ENCODE measurements at regions of chr15 and their contacts with region 1.

Region 1: GRCh38 chr15:83559310-83559966 is 94.5 kb upstream of the ADAMTSL3 start:
- DNase-seq: no peak
- ATAC-seq: no peak
- H3K4me3 ChIP-seq: no peak overlapping the region
- H3K27ac ChIP-seq: no peak overlapping the region
- H3K4me1 ChIP-seq: no peaks in the 10 kb centered on the region
- H3K27me3 ChIP-seq: peaks cover 0 to 1% (median 0%) of the 10 kb centered on the region in 3 donors
- CTCF ChIP-seq: peak; percentile 27 to 72 (median 52)
- POLR2A ChIP-seq: no peak

Region 2: GRCh38 chr15:83248151-83249029 is 311.0 kb before region 1 on chr15:
- in situ Hi-C with region 1: loop called in 3 of 4 experiments (anchors 5 to 25 kb)
- intact Hi-C with region 1: loop called (anchors 5 kb)
- DNase-seq: no peak
- ATAC-seq: peak in 1 of 2 donors; percentile 61
- H3K4me3 ChIP-seq: no peak overlapping the region
- H3K27ac ChIP-seq: no peak overlapping the region
- H3K4me1 ChIP-seq: no peaks in the 10 kb centered on the region
- H3K27me3 ChIP-seq: peaks cover 5 to 22% (median 9%) of the 10 kb centered on the region in 3 donors
- CTCF ChIP-seq: peak; percentile 67 to 89 (median 71)
- POLR2A ChIP-seq: no peak

Region 3: DNA sequence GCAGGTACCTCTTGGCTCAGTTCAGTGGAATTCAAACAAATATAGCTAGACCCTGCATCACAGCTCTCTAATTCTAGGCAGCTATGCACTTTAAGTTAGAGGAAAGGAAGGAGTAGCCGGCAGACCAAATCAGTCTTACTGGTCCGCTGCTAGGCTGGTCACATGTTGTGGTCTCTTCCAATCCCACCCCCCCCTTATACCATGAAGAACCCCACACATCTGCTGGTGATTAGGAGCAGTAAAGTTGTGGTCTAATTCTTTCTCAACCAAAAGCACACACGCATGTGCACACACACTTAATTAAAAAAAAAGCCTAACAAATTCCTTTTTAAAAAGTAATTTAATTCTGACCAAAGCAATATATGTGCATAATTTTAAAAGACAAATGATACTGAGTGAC is 129.0 kb before region 1 on chr15:
- in situ Hi-C with region 1: loop called (anchors 5 to 10 kb)
- intact Hi-C with region 1: no loop called
- DNase-seq: no peak
- ATAC-seq: no peak
- H3K4me3 ChIP-seq: no peak overlapping the region
- H3K27ac ChIP-seq: no peak overlapping the region
- H3K4me1 ChIP-seq: no peaks in the 10 kb centered on the region
- H3K27me3 ChIP-seq: peaks cover 0 to 6% (median 4%) of the 10 kb centered on the region in 3 donors
- CTCF ChIP-seq: no peak
- POLR2A ChIP-seq: no peak

Region 4: DNA sequence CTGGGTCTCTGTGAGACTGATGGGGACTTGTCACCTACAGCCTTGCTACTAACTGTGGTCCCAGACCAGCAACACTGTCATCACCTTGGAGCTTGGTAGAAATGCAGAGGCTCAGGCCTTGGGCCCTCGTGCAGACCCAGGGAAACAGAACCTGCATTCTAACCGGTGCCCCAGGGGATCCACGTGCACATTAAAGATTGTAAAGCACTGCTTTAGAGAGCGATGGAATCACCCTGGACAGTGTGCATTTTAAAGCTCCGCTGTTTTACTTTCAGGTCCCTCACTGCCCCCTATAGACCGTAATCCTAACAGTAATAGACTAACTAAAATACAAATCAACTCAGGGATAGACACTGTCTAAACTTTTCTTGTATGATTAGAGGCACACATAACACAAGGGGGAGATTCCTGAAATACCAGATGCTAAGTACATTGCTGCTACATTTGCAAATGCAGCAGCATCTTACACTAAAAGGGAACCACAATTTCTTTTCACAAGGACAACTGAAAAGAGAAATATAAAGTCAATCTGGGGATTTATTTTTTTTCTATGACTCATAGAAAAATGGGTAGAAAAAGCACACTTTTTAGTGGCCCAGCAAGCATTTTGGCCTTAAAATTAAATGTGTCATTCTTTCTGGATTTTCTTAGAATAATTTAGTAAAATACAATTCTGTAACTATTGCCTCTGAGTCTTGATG is 122.8 kb before region 1 on chr15:
- in situ Hi-C with region 1: loop called (anchors 5 to 10 kb)
- intact Hi-C with region 1: loop called (anchors 1 kb)
- DNase-seq: no peak
- ATAC-seq: no peak
- H3K4me3 ChIP-seq: no peak overlapping the region
- H3K27ac ChIP-seq: no peak overlapping the region
- H3K4me1 ChIP-seq: no peaks in the 10 kb centered on the region
- H3K27me3 ChIP-seq: peaks cover 0 to 4% (median 0%) of the 10 kb centered on the region in 3 donors
- CTCF ChIP-seq: no peak
- POLR2A ChIP-seq: no peak

Region 5: DNA sequence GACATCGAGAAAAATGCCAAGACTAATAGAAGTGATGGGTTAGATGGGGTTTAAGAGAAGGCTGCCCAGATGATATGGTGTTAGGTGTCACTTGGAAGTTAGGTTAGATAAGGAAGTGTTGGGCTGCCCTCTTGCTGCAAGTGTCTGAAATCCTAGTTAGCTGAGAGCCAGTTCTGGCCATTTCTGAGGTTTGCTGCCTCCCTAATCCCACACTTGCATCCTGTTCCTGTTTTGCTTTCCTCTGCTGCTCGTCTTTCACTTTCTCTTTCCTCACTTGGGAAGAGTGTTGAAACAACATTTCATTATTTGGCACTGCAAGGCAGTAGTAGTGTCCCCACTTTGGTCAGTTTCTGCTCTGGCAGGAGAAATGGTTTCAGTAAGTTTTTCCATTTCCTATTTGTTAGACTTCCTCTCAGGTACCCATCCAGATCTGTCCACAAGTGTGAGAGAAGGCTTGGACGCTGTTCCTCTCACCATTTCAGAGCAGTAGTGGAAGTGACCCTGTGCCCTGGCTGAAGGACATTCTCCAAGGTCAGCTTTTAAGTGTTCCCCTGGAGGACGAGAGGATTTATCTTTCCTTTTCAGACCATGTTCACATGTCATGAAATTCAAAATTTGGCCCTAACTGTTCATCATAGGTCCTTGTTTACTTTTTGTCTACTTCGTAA is 187.7 kb after region 1 on chr15:
- in situ Hi-C with region 1: loop called in 1 of 4 experiments (anchors 25 kb)
- intact Hi-C with region 1: no loop called
- DNase-seq: peak; percentile 12 to 43
- ATAC-seq: peak; percentile 80
- H3K4me3 ChIP-seq: peak overlapping the region in 1 of 4 donors; percentile 24
- H3K27ac ChIP-seq: peak overlapping the region in 3 of 4 donors; percentile 27 to 50 (median 49)
- H3K4me1 ChIP-seq: no peaks in the 10 kb centered on the region
- H3K27me3 ChIP-seq: no peaks in the 10 kb centered on the region
- CTCF ChIP-seq: peak in 1 of 5 experiments; percentile 37
- POLR2A ChIP-seq: no peak

Region 6: DNA sequence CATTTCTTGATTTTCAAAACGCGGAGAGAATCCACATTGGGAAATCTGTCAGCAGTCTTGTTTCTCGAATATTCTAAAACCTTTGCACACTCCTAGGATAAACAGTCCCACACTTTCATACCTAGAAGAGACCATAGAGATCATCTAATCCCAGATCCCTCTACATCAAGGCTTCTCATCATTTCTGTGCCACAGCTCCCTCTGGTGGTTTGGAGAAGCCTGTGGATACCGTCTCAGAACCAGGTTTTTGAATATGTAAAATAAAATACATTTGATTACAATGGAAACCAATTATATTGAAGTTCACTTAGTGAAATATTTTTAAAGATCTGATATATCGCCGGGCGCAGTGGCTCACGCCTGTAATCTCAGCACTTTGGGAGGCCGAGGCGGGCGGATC is 464.2 kb after region 1 on chr15:
- in situ Hi-C with region 1: loop called in 3 of 4 experiments (anchors 10 to 25 kb)
- intact Hi-C with region 1: no loop called
- DNase-seq: no peak
- ATAC-seq: no peak
- H3K4me3 ChIP-seq: no peak overlapping the region
- H3K27ac ChIP-seq: no peak overlapping the region
- H3K4me1 ChIP-seq: no peaks in the 10 kb centered on the region
- H3K27me3 ChIP-seq: no peaks in the 10 kb centered on the region
- CTCF ChIP-seq: peak in 4 of 5 experiments; percentile 24 to 47 (median 37)
- POLR2A ChIP-seq: no peak

Region 7: DNA sequence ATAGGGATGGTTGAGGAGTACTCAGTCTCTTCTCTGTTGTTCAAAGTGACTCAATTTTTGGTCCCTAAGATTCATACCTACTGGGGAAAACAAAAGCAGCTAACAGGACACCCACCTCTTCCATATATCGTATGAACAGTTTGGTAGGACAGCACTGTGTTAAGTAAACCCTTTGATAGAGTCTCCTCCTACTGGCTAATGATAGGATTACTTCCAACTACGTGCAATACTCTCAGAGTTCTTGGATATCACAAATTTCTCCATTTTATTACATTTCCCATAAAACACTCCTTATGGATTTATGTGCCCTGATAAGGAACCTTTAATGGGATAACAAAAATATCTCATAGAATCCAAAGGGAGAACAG is 475.9 kb after region 1 on chr15:
- in situ Hi-C with region 1: loop called in 2 of 4 experiments (anchors 25 kb)
- intact Hi-C with region 1: no loop called
- DNase-seq: no peak
- ATAC-seq: no peak
- H3K4me3 ChIP-seq: no peak overlapping the region
- H3K27ac ChIP-seq: no peak overlapping the region
- H3K4me1 ChIP-seq: no peaks in the 10 kb centered on the region
- H3K27me3 ChIP-seq: no peaks in the 10 kb centered on the region
- CTCF ChIP-seq: peak in 1 of 5 experiments; percentile 11
- POLR2A ChIP-seq: no peak